Dorsolateral prefrontal cortex (tissue), 120 donors: ENCODE measurements at regions of chr12 and their contacts with region 1.

Region 1: GRCh38 chr12:94615284-94616181 is 34.8 kb downstream of the TMCC3 start:
- DNase-seq: peak in 3 of 10 donors; percentile 24 to 59 (median 34)
- H3K4me3 ChIP-seq: peak overlapping the region; percentile 5 to 68 (median 49)
- H3K27ac ChIP-seq: peak overlapping the region; percentile 21 to 98 (median 93)
- H3K27me3 ChIP-seq: no peaks in the 10 kb centered on the region
- CTCF ChIP-seq: no peak

Region 2: DNA sequence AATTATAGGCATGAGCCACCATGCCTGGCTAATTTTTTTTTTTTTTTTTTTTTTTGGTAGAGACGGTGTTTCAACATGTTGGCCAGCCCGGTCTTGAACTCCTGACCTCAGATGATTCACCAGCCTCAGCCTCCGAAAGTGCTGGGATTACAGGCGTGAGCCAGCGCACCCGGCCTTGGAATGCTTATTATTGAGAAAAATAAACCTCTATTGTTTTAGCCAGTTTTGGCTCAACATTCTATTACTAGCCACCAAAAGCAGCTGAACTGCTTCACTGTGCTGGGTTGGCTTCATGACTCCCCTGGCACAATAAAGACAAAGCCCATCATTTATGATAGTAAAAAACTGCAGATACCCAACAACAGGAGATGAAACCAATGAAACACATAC is 62.4 kb before region 1 on chr12:
- intact Hi-C with region 1: loop called in 1 of 2 experiments (anchors 5 kb)
- DNase-seq: peak in 7 of 10 donors; percentile 33 to 79 (median 56)
- H3K4me3 ChIP-seq: no peak overlapping the region
- H3K27ac ChIP-seq: peak overlapping the region in 53 of 59 donors; percentile 4 to 93 (median 76)
- H3K27me3 ChIP-seq: no peaks in the 10 kb centered on the region
- CTCF ChIP-seq: no peak

Region 3: DNA sequence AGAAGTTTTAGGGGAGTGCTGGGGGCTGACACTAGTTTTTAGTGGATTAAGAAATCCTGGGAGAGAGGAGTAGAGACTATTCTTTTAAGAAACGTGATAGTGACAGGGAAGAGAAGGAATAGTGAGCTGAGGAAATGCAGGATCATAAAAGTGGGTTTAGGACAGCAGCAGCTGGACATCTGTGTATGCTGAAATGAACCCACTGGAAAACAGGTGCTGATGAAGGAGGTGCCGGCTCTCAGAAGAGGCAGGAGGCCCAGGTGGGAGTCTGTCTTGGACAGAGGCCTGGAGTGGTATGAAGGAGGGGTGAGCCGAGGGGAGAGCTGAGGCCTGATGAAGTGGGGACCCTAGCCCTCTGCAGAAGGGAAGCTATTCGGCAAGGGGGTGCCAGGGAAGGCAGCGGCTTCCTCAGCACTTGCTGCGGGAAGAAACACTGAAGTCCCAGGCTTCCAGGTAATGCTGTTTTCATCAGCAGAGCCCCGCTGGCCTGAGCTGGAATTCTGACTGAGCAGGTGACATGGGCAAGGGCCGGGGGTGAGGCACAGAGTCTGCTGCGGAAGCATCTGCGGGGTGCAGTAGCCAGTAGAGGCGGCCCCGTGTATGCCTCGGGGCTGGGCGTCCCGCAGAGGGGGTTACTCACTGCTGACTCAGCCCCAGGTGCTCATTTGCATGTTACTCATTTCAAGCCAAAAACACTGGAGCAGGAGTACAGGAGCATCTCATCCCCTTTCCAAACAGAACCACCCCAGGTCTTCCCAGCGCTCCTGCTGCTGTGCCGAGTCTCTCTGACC is 54.9 kb before region 1 on chr12:
- intact Hi-C with region 1: loop called in 1 of 2 experiments (anchors 5 kb)
- DNase-seq: peak in 9 of 10 donors; percentile 53 to 88 (median 73)
- H3K4me3 ChIP-seq: peak overlapping the region in 5 of 59 donors; percentile 1 to 28 (median 5)
- H3K27ac ChIP-seq: peak overlapping the region in 55 of 59 donors; percentile 14 to 95 (median 83)
- H3K27me3 ChIP-seq: no peaks in the 10 kb centered on the region
- CTCF ChIP-seq: peak in 2 of 56 donors; percentile 22 to 32

Region 4: GRCh38 chr12:94649349-94650142 is 34.0 kb after region 1 on chr12:
- intact Hi-C with region 1: loop called (anchors 1 to 5 kb)
- DNase-seq: peak; percentile 12 to 75 (median 42)
- H3K4me3 ChIP-seq: peak overlapping the region; percentile 44 to 92 (median 75)
- H3K27ac ChIP-seq: peak overlapping the region in 58 of 59 donors; percentile 34 to 92 (median 83)
- H3K27me3 ChIP-seq: peaks cover 0 to 9% (median 0%) of the 10 kb centered on the region in 45 donors
- CTCF ChIP-seq: peak in 51 of 56 donors; percentile 10 to 64 (median 45)